HCT116 (cell line): ENCODE measurements at regions of chr6 and their contacts with region 1.

Region 1: DNA sequence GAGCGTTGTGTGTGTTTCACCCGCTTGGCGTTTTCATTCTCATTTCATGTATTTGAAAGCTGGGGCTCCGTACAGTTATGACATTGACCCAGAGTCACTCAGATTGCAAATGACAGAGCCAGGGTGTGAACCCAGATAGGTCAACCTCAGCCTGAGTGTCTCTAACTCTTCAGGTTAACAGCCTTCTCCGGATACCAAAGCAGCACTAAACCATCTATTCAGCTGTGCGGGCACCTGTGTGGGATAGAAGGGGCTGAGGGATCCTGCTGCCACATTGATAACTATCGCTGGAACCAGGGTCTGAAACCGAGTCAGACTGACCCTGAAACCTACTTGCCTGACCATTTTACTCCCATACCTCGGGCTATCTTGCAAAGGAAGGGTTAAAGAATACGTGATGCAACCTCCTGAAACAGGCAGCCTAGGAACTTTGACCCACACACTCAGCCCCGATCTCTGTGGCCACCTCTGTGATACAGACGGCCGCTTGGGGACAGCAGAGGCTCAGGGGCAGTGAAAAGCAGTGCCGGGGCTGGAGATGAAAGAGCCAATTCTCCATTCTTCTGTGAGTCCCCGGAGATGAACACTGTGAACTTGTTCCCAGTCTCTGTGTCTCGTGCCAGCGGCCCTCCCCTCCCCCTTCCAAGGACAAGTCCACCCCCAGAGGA is 233.5 kb upstream of the QKI start:
- DNase-seq: peak; percentile 41
- ATAC-seq: peak; percentile 96
- H3K4me3 ChIP-seq: no peak overlapping the region
- H3K27ac ChIP-seq: no peak overlapping the region
- H3K4me1 ChIP-seq: peaks cover 0 to 4% of the 10 kb centered on the region in 2 experiments; a peak in 1 of 4 replicates
- H3K27me3 ChIP-seq: no peaks in the 10 kb centered on the region
- CTCF ChIP-seq: peak; percentile 49 to 68 (median 61); a peak in 5 of 6 replicates
- POLR2A ChIP-seq: no peak
- RAD21 ChIP-seq: peak; percentile 90

Region 2: GRCh38 chr6:163413345-163414116 is 232.5 kb after region 1 on chr6:
- CTCF ChIA-PET with region 1: no interaction called
- POLR2A ChIA-PET with region 1: no interaction called
- RAD21 ChIA-PET with region 1: no interaction called
- intact Hi-C with region 1: loop called (anchors 2 kb)
- DNase-seq: peak; percentile 29
- ATAC-seq: peak; percentile 64
- H3K4me3 ChIP-seq: no peak overlapping the region; a peak in 1 of 4 replicates
- H3K27ac ChIP-seq: peak overlapping the region; percentile 24; the same call in 1 of the 2 replicates
- H3K4me1 ChIP-seq: peaks cover 3 to 4% of the 10 kb centered on the region in 2 experiments
- H3K27me3 ChIP-seq: no peaks in the 10 kb centered on the region
- CTCF ChIP-seq: no peak
- POLR2A ChIP-seq: no peak
- RAD21 ChIP-seq: no peak

Region 3: GRCh38 chr6:163554663-163555062 is 373.7 kb after region 1 on chr6:
- CTCF ChIA-PET with region 1: no interaction called
- POLR2A ChIA-PET with region 1: no interaction called
- RAD21 ChIA-PET with region 1: no interaction called
- intact Hi-C with region 1: loop called (anchors 10 kb)
- DNase-seq: no peak
- ATAC-seq: peak; percentile 60; the same call in 1 of the 2 replicates
- H3K4me3 ChIP-seq: no peak overlapping the region
- H3K27ac ChIP-seq: no peak overlapping the region
- H3K4me1 ChIP-seq: no peaks in the 10 kb centered on the region
- H3K27me3 ChIP-seq: no peaks in the 10 kb centered on the region
- CTCF ChIP-seq: peak; percentile 27 to 61 (median 52); a peak in 4 of 6 replicates
- POLR2A ChIP-seq: no peak
- RAD21 ChIP-seq: peak; percentile 58

Region 4: GRCh38 chr6:163828038-163828795 is 647.2 kb after region 1 on chr6:
- CTCF ChIA-PET with region 1: no interaction called
- POLR2A ChIA-PET with region 1: no interaction called
- RAD21 ChIA-PET with region 1: no interaction called
- intact Hi-C with region 1: no loop called
- DNase-seq: no peak
- ATAC-seq: no peak
- H3K4me3 ChIP-seq: no peak overlapping the region
- H3K27ac ChIP-seq: no peak overlapping the region
- H3K4me1 ChIP-seq: no peaks in the 10 kb centered on the region
- H3K27me3 ChIP-seq: no peaks in the 10 kb centered on the region
- CTCF ChIP-seq: no peak
- POLR2A ChIP-seq: no peak
- RAD21 ChIP-seq: no peak

Region 5: GRCh38 chr6:163956571-163957407 is 775.8 kb after region 1 on chr6:
- CTCF ChIA-PET with region 1: no interaction called
- POLR2A ChIA-PET with region 1: no interaction called
- RAD21 ChIA-PET with region 1: no interaction called
- intact Hi-C with region 1: loop called (anchors 2 kb)
- DNase-seq: peak; percentile 67
- ATAC-seq: peak; percentile 99
- H3K4me3 ChIP-seq: no peak overlapping the region
- H3K27ac ChIP-seq: no peak overlapping the region
- H3K4me1 ChIP-seq: no peaks in the 10 kb centered on the region
- H3K27me3 ChIP-seq: no peaks in the 10 kb centered on the region
- CTCF ChIP-seq: peak; percentile 61 to 83 (median 77); a peak in 5 of 6 replicates
- POLR2A ChIP-seq: no peak
- RAD21 ChIP-seq: peak; percentile 83

Region 6: GRCh38 chr6:164106345-164106769 is 925.3 kb after region 1 on chr6:
- CTCF ChIA-PET with region 1: no interaction called
- POLR2A ChIA-PET with region 1: no interaction called
- RAD21 ChIA-PET with region 1: no interaction called
- intact Hi-C with region 1: loop called (anchors 5 kb)
- DNase-seq: no peak
- ATAC-seq: peak; percentile 69
- H3K4me3 ChIP-seq: no peak overlapping the region
- H3K27ac ChIP-seq: no peak overlapping the region
- H3K4me1 ChIP-seq: no peaks in the 10 kb centered on the region; a peak in 1 of 4 replicates
- H3K27me3 ChIP-seq: no peaks in the 10 kb centered on the region
- CTCF ChIP-seq: peak; percentile 8 to 43 (median 40); a peak in 4 of 6 replicates
- POLR2A ChIP-seq: no peak
- RAD21 ChIP-seq: peak; percentile 43; the same call in 1 of the 2 replicates